Body of pancreas (tissue), 4 donors: ENCODE measurements at regions of chr4 and their contacts with region 1.

Region 1: GRCh38 chr4:75673027-75673958 is at the start of gene G3BP2:
- DNase-seq: peak; percentile 98 to 99 (median 98)
- ATAC-seq: peak; percentile 99
- H3K4me3 ChIP-seq: peak within 1 kb of the TSS; percentile 75 to 93
- H3K27ac ChIP-seq: peak within 1 kb of the TSS; percentile 88 to 96 (median 92)
- H3K4me1 ChIP-seq: peaks cover 33% of the 10 kb centered on the region
- H3K27me3 ChIP-seq: no peaks in the 10 kb centered on the region
- CTCF ChIP-seq: peak in 1 of 7 experiments; percentile 12
- POLR2A ChIP-seq: peak; percentile 91 to 97 (median 97)
- total RNA-seq, gene G3BP2: 29.7 to 65.6 TPM

Region 2: GRCh38 chr4:75724066-75724866 is 51.0 kb after region 1 on chr4 and contains the start of gene USO1:
- intact Hi-C with region 1: loop called (anchors 10 kb)
- DNase-seq: peak; percentile 99
- ATAC-seq: peak; percentile 95
- H3K4me3 ChIP-seq: peak within 1 kb of the TSS; percentile 64 to 92
- H3K27ac ChIP-seq: peak within 1 kb of the TSS; percentile 95 to 100 (median 98)
- H3K4me1 ChIP-seq: peaks cover 36% of the 10 kb centered on the region
- H3K27me3 ChIP-seq: no peaks in the 10 kb centered on the region
- CTCF ChIP-seq: peak; percentile 35 to 94 (median 76)
- POLR2A ChIP-seq: peak; percentile 96 to 99 (median 99)
- total RNA-seq, gene USO1: 57.6 to 89.7 TPM